Right lobe of liver (tissue), 6 donors: ENCODE measurements at regions of chr22 and their contacts with region 1.

Region 1: GRCh38 chr22:49303781-49304461 is 523.8 kb downstream of the BRD1 start:
- DNase-seq: peak in 2 of 3 donors; percentile 16 to 35
- ATAC-seq: no peak
- H3K4me3 ChIP-seq: no peak overlapping the region
- H3K27ac ChIP-seq: no peak overlapping the region
- H3K4me1 ChIP-seq: no peaks in the 10 kb centered on the region
- H3K27me3 ChIP-seq: no peaks in the 10 kb centered on the region
- CTCF ChIP-seq: no peak
- POLR2A ChIP-seq: no peak

Region 2: GRCh38 chr22:48574776-48575565 is 729.0 kb before region 1 on chr22:
- intact Hi-C with region 1: loop called in 1 of 2 experiments (anchors 5 kb)
- DNase-seq: no peak
- ATAC-seq: peak in 3 of 4 donors; percentile 38 to 83 (median 57)
- H3K4me3 ChIP-seq: no peak overlapping the region
- H3K27ac ChIP-seq: no peak overlapping the region
- H3K4me1 ChIP-seq: no peaks in the 10 kb centered on the region
- H3K27me3 ChIP-seq: peaks cover 0 to 10% of the 10 kb centered on the region in 2 donors
- CTCF ChIP-seq: peak in 2 of 4 donors; percentile 24 to 57
- POLR2A ChIP-seq: no peak

Region 3: GRCh38 chr22:49046546-49047361 is 257.2 kb before region 1 on chr22:
- intact Hi-C with region 1: loop called (anchors 5 kb)
- DNase-seq: peak in 2 of 3 donors; percentile 47 to 50
- ATAC-seq: peak; percentile 73 to 83 (median 80)
- H3K4me3 ChIP-seq: no peak overlapping the region
- H3K27ac ChIP-seq: no peak overlapping the region
- H3K4me1 ChIP-seq: no peaks in the 10 kb centered on the region
- H3K27me3 ChIP-seq: no peaks in the 10 kb centered on the region
- CTCF ChIP-seq: peak; percentile 47 to 58 (median 52)
- POLR2A ChIP-seq: no peak

Region 4: DNA sequence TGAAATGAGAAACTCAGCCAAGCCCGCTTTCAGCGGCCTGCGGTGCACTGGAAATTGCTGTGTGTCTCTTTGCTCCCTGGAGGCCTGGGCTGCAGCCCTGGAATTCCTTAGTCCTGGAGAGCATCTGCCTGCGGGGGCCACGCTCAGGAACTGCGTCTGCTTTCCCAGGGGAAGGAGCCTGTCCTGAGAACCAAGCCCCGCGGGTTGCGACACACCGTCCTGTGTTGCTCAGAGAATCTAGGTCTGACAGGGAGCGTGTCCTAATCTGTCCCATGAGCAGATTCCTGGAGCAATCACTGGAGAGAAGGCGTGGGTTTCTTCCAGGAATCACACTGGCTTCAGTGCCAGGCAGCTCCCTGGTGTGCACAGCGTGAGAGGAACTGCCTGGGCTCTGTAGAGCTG is 184.4 kb before region 1 on chr22:
- intact Hi-C with region 1: no loop called
- DNase-seq: peak in 1 of 3 donors; percentile 39
- ATAC-seq: no peak
- H3K4me3 ChIP-seq: no peak overlapping the region
- H3K27ac ChIP-seq: no peak overlapping the region
- H3K4me1 ChIP-seq: no peaks in the 10 kb centered on the region
- H3K27me3 ChIP-seq: no peaks in the 10 kb centered on the region
- CTCF ChIP-seq: no peak
- POLR2A ChIP-seq: no peak

Region 5: DNA sequence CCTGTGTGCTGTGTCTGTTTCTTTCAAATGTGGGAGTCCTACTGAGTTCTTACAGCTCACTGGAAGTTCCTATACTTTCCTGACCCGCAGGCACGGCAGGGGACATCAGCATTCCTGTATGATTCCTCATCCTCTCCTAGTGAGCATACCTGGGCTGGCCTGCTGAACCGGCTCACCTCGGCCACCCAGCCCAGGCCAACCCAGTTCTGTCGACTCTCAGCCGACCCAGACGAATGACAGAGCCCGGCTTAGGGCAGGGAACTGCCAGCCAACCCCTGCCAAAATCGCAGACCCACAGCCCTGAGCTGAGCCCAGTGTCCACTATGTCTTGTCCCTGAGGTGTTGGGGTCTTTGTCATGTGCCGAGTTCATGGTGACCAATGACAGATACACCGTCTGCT is 184.0 kb after region 1 on chr22:
- intact Hi-C with region 1: no loop called
- DNase-seq: no peak
- ATAC-seq: no peak
- H3K4me3 ChIP-seq: no peak overlapping the region
- H3K27ac ChIP-seq: no peak overlapping the region
- H3K4me1 ChIP-seq: no peaks in the 10 kb centered on the region
- H3K27me3 ChIP-seq: no peaks in the 10 kb centered on the region
- CTCF ChIP-seq: no peak
- POLR2A ChIP-seq: no peak